Ascending aorta (tissue), 2 donors: ENCODE measurements at regions of chr1 and their contacts with region 1.

Region 1: GRCh38 chr1:35030756-35031446 is 844 bp downstream of the ZMYM6 start:
- DNase-seq: peak in 1 of 2 donors; percentile 65
- H3K4me3 ChIP-seq: peak overlapping the region; percentile 65 to 84
- H3K27ac ChIP-seq: peak overlapping the region; percentile 91 to 94
- H3K4me1 ChIP-seq: peaks cover 0 to 16% of the 10 kb centered on the region in 2 donors
- H3K27me3 ChIP-seq: no peaks in the 10 kb centered on the region
- CTCF ChIP-seq: no peak

Region 2: DNA sequence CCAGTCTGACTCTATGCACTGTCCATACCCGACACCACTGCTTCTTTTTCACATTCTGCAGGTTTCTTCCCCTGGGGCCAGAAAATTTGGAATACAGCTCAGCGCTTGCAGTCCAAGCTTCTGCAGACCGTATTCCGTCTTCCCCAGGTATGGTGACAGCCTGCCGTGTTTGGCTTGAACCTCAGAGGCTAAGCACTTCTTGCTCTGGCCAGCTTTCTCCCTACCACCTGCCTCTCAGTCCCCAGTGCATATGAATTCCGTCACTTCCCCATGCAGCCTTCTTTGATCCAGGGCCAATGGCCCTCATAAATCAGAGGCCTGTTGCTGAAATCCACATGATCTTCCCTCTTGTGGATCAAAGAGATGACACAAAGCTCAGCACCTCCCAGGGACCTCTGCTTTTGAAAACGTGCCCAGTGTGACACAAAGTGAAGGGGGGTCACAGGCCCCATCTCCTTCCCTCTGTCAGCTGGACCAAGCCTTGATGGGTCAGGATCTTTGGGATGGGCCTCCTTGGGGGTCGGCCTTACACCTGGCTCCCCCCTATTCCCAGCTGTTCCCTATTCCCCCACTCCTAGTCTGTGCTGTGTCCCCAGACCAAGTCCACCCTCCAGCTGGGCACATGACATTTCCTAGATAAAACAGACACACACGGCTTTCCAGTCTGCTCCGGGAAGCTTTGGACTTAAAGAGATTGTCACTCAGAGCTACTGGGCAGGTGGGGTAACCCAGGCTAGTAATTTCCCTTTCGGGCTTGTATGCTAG is 1100.4 kb before region 1 on chr1:
- intact Hi-C with region 1: no loop called
- DNase-seq: no peak
- H3K4me3 ChIP-seq: no peak overlapping the region
- H3K27ac ChIP-seq: no peak overlapping the region
- H3K4me1 ChIP-seq: no peaks in the 10 kb centered on the region
- H3K27me3 ChIP-seq: no peaks in the 10 kb centered on the region
- CTCF ChIP-seq: no peak

Region 3: DNA sequence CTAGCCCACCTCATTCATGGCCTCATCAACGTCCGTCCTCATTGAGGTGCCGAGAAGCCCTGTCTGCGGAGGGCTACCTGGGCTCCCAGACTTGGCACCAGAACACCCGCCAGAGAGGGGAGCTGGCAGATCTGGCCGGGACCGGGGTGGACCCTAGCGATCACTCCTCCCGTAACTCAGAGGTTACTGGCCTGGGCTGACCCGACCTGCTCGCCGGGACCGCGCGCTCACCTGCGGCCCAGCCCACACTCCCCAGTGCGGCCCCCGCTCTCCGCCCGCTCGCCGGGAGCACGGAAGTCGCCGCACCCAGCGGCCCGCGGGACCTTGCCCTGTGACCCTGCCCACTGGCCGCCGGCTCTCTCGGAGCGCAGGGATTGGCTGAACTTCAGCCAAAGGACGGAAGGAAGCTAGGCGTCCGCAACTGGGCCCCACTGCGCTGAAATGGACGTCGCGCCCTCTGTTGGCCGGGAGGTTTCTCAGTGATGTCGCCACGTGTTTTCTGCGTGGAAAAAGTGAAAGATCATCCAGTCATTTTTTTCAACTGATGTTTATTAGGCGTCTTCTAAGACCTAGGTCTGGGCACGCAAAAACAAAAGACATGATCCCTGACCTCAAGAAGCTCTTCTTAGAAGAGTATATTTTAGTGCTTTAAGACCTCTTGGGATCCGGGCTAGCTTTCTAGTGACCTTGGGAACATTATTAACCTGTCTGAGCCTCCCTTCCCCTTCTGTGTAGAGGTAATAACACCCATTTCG is 171.3 kb before region 1 on chr1 and contains the start of gene SMIM12:
- intact Hi-C with region 1: loop called (anchors 2 kb)
- DNase-seq: peak; percentile 73 to 97
- H3K4me3 ChIP-seq: peak within 1 kb of the TSS; percentile 56 to 93
- H3K27ac ChIP-seq: peak within 1 kb of the TSS; percentile 89 to 90
- H3K4me1 ChIP-seq: peaks cover 10 to 12% of the 10 kb centered on the region in 2 donors
- H3K27me3 ChIP-seq: no peaks in the 10 kb centered on the region
- CTCF ChIP-seq: peak; percentile 90 to 92 (median 91)
- total RNA-seq, gene SMIM12: 23.2 TPM

Region 4: GRCh38 chr1:34984793-34985608 is 45.9 kb before region 1 on chr1 and contains the start of gene TMEM35B:
- intact Hi-C with region 1: loop called (anchors 5 kb)
- DNase-seq: peak in 1 of 2 donors; percentile 81
- H3K4me3 ChIP-seq: peak within 1 kb of the TSS; percentile 70 to 92
- H3K27ac ChIP-seq: peak within 1 kb of the TSS; percentile 95 to 96
- H3K4me1 ChIP-seq: peaks cover 8 to 15% of the 10 kb centered on the region in 2 donors
- H3K27me3 ChIP-seq: no peaks in the 10 kb centered on the region
- CTCF ChIP-seq: peak in 1 of 3 experiments; percentile 5
- total RNA-seq, gene TMEM35B: 16.1 TPM

Region 5: DNA sequence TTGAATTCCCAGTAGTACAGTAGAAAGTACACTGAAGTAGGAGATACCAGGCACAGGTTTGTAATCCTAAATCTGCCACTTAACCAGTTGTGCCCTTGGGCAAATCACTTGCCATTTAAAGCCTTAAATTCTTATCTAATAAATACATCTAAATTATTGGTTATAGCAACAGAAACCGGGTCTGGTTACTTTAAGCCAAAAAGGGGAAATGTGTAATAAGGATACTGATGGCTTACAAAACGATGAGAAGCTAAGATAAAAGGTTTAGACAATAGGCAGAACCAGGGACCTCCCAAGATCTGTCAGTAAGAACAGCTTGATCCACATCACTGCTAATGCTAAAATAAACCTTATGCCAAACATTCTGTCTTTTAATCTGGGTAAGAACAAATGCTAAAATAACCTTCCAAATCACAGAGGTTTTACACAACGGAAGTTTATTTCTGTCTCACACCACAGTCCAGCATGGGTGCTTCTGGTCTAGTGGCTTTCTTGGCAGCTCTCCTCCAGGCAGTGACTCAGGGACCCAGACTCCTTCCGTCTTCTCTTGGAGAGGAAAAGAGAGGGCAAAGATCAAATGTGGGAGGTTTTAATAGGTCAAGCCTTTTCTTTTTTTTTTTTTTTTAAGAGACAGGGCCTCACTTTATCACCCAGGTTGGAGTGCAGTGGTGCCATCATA is 31.8 kb after region 1 on chr1:
- intact Hi-C with region 1: no loop called
- DNase-seq: no peak
- H3K4me3 ChIP-seq: no peak overlapping the region
- H3K27ac ChIP-seq: no peak overlapping the region
- H3K4me1 ChIP-seq: no peaks in the 10 kb centered on the region
- H3K27me3 ChIP-seq: no peaks in the 10 kb centered on the region
- CTCF ChIP-seq: no peak

Region 6: DNA sequence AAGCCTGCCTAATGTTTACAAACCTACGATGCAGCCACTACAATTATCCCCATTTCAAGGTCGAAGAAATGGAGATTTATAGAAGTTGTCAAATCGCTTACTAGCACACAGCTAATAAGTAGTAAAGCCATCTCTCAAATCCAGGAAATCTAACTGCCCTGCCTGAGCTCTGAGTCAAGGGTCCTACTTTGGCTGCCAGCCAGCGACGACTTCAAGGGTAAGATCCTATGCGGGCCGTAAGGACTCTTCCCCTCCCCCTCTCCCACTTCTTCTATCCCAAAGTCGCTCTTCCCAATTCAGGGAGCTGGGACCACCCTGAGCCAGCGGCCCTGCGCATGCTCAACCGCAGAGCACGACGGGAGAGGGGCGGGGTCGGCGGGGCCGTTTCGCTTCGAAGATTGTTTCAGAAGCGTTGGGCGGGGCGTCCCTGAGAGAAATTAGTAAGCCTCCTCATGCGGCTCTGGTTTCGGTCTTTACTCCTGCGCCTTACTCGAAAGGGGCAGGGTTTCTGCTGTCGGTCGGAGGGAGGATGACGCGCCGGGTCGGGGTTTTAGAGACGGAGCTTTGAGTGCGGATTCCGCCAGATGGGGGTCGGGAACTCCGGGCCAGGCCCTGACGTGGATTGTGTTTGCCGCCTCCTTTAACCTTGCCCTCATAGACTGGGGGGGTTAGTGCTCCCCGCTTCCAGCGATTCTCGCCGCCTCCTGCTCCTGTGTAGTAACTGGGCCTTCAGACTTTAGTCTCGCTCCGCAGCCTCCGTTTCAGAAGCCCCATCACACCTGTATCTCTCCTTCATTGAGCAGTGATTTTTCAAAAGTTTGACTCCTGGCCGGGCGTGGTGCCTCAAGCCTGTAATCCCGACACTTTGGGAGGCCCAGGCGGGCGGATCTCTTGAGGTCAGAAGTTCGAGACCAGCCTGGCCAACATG is 48.4 kb after region 1 on chr1 and contains the start of gene ZMYM1:
- intact Hi-C with region 1: loop called (anchors 2 kb)
- DNase-seq: peak; percentile 19 to 89
- H3K4me3 ChIP-seq: peak within 1 kb of the TSS; percentile 74 to 77
- H3K27ac ChIP-seq: peak within 1 kb of the TSS; percentile 85 to 94
- H3K4me1 ChIP-seq: peaks cover 0 to 5% of the 10 kb centered on the region in 2 donors
- H3K27me3 ChIP-seq: no peaks in the 10 kb centered on the region
- CTCF ChIP-seq: no peak
- total RNA-seq, gene ZMYM1: 4.6 TPM

Region 7: GRCh38 chr1:35192853-35193664 is 162.2 kb after region 1 on chr1 and contains the start of gene SFPQ:
- intact Hi-C with region 1: loop called (anchors 2 kb)
- DNase-seq: peak; percentile 94 to 99
- H3K4me3 ChIP-seq: peak within 1 kb of the TSS; percentile 72 to 100
- H3K27ac ChIP-seq: peak within 1 kb of the TSS; percentile 99
- H3K4me1 ChIP-seq: peaks cover 5 to 22% of the 10 kb centered on the region in 2 donors
- H3K27me3 ChIP-seq: no peaks in the 10 kb centered on the region
- CTCF ChIP-seq: no peak
- total RNA-seq, gene SFPQ: 231 TPM

Region 8: DNA sequence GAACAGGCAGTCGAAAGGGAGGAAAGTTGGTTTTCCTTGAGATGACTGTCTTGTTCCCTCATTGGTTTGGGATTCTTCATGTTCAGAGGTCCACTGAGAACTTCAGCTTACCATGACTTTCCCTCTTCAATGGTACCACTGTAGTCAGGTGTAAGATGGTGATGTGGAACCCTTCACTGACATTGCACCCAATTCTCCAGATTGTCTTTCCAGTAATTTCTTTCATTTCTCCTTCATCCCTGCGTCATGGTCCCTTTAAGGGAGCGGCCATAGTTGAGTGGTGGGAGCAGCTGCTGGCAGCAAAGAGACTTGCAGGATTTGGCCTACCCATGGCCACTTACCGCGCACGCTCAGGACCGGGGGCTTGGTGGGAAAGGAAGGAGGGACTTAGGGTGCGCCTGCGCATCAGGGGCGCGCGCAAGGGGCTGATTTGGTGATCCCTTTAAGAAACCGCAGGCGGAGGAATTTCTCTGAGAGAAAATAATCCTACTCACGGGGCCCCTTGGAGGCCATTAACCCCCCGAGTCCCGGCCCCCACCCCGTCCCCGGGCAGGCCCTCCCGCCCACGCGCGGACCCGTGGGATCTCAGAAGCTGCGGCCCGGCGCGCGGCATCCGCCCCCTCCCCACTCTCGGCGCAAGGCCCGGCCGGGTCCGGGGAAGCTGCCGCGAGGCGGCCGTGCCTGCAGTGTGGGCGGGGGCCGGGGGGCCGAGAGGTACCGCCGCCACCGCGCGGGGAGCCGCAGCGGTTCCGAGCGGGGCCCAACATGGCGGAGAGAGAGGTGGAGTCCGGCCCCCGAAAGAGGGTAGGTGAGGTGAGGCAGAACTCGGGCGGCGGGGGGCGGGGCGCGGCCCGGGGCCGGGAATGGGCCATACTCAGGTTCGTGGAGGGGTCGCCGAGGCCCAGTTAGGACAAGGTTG is 237.6 kb after region 1 on chr1 and contains the start of gene ZMYM4:
- intact Hi-C with region 1: loop called (anchors 5 kb)
- DNase-seq: peak; percentile 60 to 95
- H3K4me3 ChIP-seq: peak within 1 kb of the TSS; percentile 93 to 99
- H3K27ac ChIP-seq: peak within 1 kb of the TSS; percentile 81 to 89
- H3K4me1 ChIP-seq: peaks cover 0 to 10% of the 10 kb centered on the region in 2 donors
- H3K27me3 ChIP-seq: no peaks in the 10 kb centered on the region
- CTCF ChIP-seq: no peak
- total RNA-seq, gene ZMYM4: 9.6 TPM